ENCODE measurements at regions of chr14 and their contacts with region 1.

Region 1: DNA sequence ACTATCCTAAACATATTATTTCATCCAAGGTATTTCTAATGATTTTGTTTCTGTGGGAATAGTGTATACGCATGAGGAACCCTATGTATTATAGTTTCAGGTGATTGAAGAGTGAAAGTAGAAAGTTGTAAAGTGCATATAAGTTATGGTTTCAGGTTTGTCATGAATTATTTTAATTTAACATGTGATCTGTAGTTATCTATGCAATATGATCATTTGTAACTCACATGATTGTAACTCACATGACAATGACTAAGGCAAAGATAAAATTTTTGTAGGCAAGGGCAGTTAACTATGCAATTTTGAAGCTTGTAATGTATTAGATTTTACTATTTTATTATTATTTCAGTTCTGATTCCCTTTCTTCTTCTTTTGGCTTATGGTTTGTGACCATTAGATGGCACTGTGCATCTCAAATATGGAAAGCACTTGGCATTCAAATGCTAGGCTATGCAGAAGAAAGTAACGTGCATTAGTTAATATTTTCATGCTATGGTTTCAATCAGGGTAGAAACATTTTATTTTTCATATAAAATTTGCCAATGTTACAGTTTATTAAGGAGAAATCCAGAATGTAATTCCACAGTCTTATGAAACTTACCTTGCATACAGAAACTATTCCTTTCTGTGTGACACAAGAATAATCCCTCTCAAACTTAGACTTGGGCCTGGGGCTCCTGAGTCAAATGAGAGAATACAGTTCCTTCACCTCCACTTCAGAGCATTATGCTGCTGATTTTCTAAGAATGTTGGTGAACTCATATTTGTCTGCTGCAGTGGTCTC is 15.8 kb upstream of the TMEM30B start:
- DNase-seq: no peak
- H3K4me3 ChIP-seq: no peak overlapping the region
- H3K27ac ChIP-seq: no peak overlapping the region
- H3K4me1 ChIP-seq: peaks cover 0 to 15% (median 5%) of the 10 kb centered on the region in 6 donors
- H3K27me3 ChIP-seq: no peaks in the 10 kb centered on the region
- CTCF ChIP-seq: peak; percentile 32 to 75 (median 63)
- POLR2A ChIP-seq: no peak

Region 2: GRCh38 chr14:61456720-61457119 is 159.8 kb after region 1 on chr14:
- intact Hi-C with region 1: loop called (anchors 5 kb)
- DNase-seq: peak; percentile 88
- H3K4me3 ChIP-seq: no peak overlapping the region
- H3K27ac ChIP-seq: no peak overlapping the region
- H3K4me1 ChIP-seq: peaks cover 7 to 69% (median 47%) of the 10 kb centered on the region in 6 donors
- H3K27me3 ChIP-seq: no peaks in the 10 kb centered on the region
- CTCF ChIP-seq: peak; percentile 43 to 90 (median 82)
- POLR2A ChIP-seq: no peak

Region 3: GRCh38 chr14:61837336-61838229 is 540.7 kb after region 1 on chr14:
- intact Hi-C with region 1: loop called (anchors 10 kb)
- DNase-seq: peak; percentile 90
- H3K4me3 ChIP-seq: no peak overlapping the region
- H3K27ac ChIP-seq: no peak overlapping the region
- H3K4me1 ChIP-seq: peaks cover 0 to 9% (median 2%) of the 10 kb centered on the region in 6 donors
- H3K27me3 ChIP-seq: no peaks in the 10 kb centered on the region
- CTCF ChIP-seq: peak; percentile 81 to 97 (median 92)
- POLR2A ChIP-seq: no peak

Measured in spleen (tissue), 13 donors.